ENCODE measurements at regions of chr4 and their contacts with region 1.

Region 1: DNA sequence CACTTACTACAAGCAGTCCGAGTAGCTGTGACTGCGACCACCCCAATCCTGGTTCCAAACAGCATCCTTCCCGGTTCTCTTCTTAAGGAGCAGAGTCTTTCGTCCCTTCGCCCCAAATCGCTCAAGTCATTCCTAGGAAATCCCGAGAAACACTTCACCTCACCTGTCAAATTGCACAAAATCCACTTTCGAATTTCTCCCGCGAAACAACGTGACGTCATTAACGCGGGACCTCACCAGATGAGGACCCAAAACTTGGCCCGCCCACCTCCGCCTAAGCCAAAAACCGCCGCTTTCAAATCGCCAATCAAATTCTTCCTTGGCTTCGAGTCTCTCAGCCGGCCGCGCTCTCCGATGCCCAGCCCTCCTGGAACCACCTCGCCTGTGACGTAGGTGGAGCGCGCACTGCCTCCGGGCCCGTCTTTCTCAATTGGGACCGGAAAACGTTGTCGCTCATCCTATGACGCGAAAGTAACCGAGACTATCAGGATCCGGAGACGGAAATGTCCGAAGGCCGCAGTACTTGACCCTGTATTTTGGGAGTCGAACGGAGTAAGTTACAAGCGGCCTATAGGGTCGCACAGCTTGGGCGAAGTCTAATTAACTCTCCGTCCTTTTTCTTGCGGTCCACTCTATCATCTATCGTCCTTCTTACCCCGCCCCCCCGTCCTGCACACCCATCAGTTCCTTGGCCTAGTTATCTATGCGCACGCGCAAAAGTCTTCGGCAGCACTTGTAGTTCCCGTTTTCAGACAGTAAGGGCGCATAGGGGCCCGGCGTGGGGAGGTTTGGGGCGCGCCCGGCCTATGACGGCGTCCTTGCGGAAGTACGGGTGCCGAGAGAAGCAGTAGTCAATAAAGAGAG is at the starts of genes LARP7 and ZGRF1:
- DNase-seq: peak; percentile 95 to 99 (median 96)
- ATAC-seq: peak; percentile 85
- H3K4me3 ChIP-seq: peak within 1 kb of the TSS; percentile 73
- H3K4me3 Mint-ChIP-seq: no peak within 1 kb of the TSS
- H3K27ac ChIP-seq: peak within 1 kb of the TSS; percentile 98
- H3K27ac Mint-ChIP-seq: no peak within 1 kb of the TSS
- H3K4me1 ChIP-seq: peaks cover 16% of the 10 kb centered on the region
- H3K4me1 Mint-ChIP-seq: peaks cover 18% of the 10 kb centered on the region
- H3K27me3 ChIP-seq: no peaks in the 10 kb centered on the region
- H3K27me3 Mint-ChIP-seq: no peaks in the 10 kb centered on the region
- CTCF ChIP-seq: peak; percentile 78
- total RNA-seq, gene LARP7: 42.9 to 43.5 TPM
- total RNA-seq, gene ZGRF1: 11.3 to 11.7 TPM

Region 2: GRCh38 chr4:112231779-112232713 is 404.9 kb before region 1 on chr4 and contains the start of gene AP1AR:
- CTCF ChIA-PET with region 1: no interaction called
- POLR2A ChIA-PET with region 1: no interaction called
- intact Hi-C with region 1: loop called (anchors 1 to 2 kb)
- DNase-seq: peak; percentile 53 to 90 (median 69)
- ATAC-seq: peak; percentile 50
- H3K4me3 ChIP-seq: peak within 1 kb of the TSS; percentile 93
- H3K4me3 Mint-ChIP-seq: peak within 1 kb of the TSS; percentile 99
- H3K27ac ChIP-seq: peak within 1 kb of the TSS; percentile 93 to 96
- H3K27ac Mint-ChIP-seq: peak within 1 kb of the TSS; percentile 98
- H3K4me1 ChIP-seq: peaks cover 13% of the 10 kb centered on the region
- H3K4me1 Mint-ChIP-seq: peaks cover 55% of the 10 kb centered on the region
- H3K27me3 ChIP-seq: no peaks in the 10 kb centered on the region
- H3K27me3 Mint-ChIP-seq: no peaks in the 10 kb centered on the region
- CTCF ChIP-seq: no peak
- total RNA-seq, gene AP1AR: 3.7 to 4.8 TPM

Region 3: GRCh38 chr4:112436955-112437354 is 200.0 kb before region 1 on chr4:
- CTCF ChIA-PET with region 1: no interaction called
- POLR2A ChIA-PET with region 1: no interaction called
- intact Hi-C with region 1: no loop called
- DNase-seq: no peak
- ATAC-seq: no peak
- H3K4me3 ChIP-seq: no peak overlapping the region
- H3K4me3 Mint-ChIP-seq: no peak overlapping the region
- H3K27ac ChIP-seq: no peak overlapping the region
- H3K27ac Mint-ChIP-seq: no peak overlapping the region
- H3K4me1 ChIP-seq: no peaks in the 10 kb centered on the region
- H3K4me1 Mint-ChIP-seq: no peaks in the 10 kb centered on the region
- H3K27me3 ChIP-seq: no peaks in the 10 kb centered on the region
- H3K27me3 Mint-ChIP-seq: no peaks in the 10 kb centered on the region
- CTCF ChIP-seq: no peak

Region 4: GRCh38 chr4:112514469-112515303 is 122.2 kb before region 1 on chr4:
- CTCF ChIA-PET with region 1: no interaction called
- POLR2A ChIA-PET with region 1: interaction called, 4 read pairs
- intact Hi-C with region 1: loop called in 1 of 2 experiments (anchors 5 kb)
- DNase-seq: peak in 1 of 14 experiments; percentile 39
- ATAC-seq: no peak
- H3K4me3 ChIP-seq: peak overlapping the region; percentile 63
- H3K4me3 Mint-ChIP-seq: peak overlapping the region; percentile 71
- H3K27ac ChIP-seq: no peak overlapping the region
- H3K27ac Mint-ChIP-seq: peak overlapping the region; percentile 28
- H3K4me1 ChIP-seq: peaks cover 56% of the 10 kb centered on the region
- H3K4me1 Mint-ChIP-seq: peaks cover 76% of the 10 kb centered on the region
- H3K27me3 ChIP-seq: peaks cover 81 to 97% of the 10 kb centered on the region in 2 experiments
- H3K27me3 Mint-ChIP-seq: peaks cover 98% of the 10 kb centered on the region
- CTCF ChIP-seq: no peak

Region 5: DNA sequence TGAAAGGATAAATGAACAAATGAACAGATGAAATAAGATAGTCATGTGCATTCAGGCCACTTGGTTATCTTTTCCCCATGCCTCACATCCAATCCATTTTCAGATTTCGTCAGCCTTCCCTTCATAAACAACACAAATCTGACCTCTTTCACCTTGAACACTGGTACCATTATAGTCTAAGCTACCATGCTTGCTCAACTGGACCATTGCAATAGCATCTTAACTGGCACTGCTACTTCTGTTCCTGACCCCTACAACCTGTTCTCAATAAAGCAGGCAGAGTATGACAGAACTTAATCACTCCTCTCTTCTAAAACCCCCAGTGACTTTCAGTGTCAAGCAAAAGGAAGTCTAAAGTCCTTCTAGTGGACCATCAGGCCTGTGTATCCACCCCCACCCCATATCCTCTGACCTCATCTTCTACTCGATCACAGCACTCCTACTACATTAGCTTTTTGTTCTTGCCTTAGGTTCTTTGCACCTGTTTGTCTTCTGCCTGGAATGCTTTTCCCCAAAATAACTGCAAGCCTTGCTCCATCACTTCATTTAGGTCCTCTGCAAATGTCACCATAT is 40.7 kb after region 1 on chr4:
- CTCF ChIA-PET with region 1: no interaction called
- POLR2A ChIA-PET with region 1: no interaction called
- intact Hi-C with region 1: no loop called
- DNase-seq: no peak
- ATAC-seq: no peak
- H3K4me3 ChIP-seq: no peak overlapping the region
- H3K4me3 Mint-ChIP-seq: no peak overlapping the region
- H3K27ac ChIP-seq: no peak overlapping the region
- H3K27ac Mint-ChIP-seq: no peak overlapping the region
- H3K4me1 ChIP-seq: no peaks in the 10 kb centered on the region
- H3K4me1 Mint-ChIP-seq: no peaks in the 10 kb centered on the region
- H3K27me3 ChIP-seq: no peaks in the 10 kb centered on the region
- H3K27me3 Mint-ChIP-seq: no peaks in the 10 kb centered on the region
- CTCF ChIP-seq: no peak

Region 6: GRCh38 chr4:112704991-112705845 is 68.3 kb after region 1 on chr4:
- CTCF ChIA-PET with region 1: no interaction called
- POLR2A ChIA-PET with region 1: no interaction called
- intact Hi-C with region 1: no loop called
- DNase-seq: peak in 3 of 14 experiments; percentile 4 to 29 (median 20)
- ATAC-seq: no peak
- H3K4me3 ChIP-seq: peak overlapping the region; percentile 43
- H3K4me3 Mint-ChIP-seq: peak overlapping the region; percentile 89
- H3K27ac ChIP-seq: no peak overlapping the region
- H3K27ac Mint-ChIP-seq: no peak overlapping the region
- H3K4me1 ChIP-seq: peaks cover 18% of the 10 kb centered on the region
- H3K4me1 Mint-ChIP-seq: peaks cover 21% of the 10 kb centered on the region
- H3K27me3 ChIP-seq: peaks cover 23 to 39% of the 10 kb centered on the region in 2 experiments
- H3K27me3 Mint-ChIP-seq: peaks cover 53% of the 10 kb centered on the region
- CTCF ChIP-seq: no peak

Region 7: DNA sequence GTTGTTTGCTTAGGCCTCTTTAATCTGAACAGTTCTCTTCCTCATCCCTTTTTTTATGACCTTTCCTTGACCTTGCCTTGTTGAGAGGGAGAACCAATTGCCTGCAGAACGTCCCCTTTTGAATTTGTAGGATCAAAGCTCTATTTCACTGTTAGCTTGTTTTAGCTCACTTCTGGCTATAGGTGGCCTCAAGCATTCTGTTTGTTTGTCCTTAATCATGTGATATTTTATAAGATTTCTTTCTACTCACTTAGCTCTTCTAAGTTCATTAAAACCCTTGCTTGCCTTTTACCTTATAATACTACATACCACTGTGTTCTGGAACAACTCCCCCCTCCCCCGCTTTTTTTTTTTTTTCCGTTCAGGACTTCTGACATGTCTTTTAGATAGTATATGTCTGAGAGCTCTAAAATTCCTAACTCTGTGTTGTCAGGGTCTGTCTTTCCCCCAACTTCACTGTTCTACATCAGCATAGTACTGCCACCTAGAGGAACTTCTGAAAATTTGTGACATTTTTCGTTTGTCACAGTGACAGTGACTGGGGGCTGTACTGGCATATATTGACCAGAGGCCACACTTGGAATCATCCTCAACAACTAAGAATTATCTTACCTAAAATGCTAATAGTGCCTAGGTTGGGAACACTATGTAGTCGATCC is 128.5 kb after region 1 on chr4:
- CTCF ChIA-PET with region 1: interaction called, 6 read pairs
- POLR2A ChIA-PET with region 1: interaction called, 3 read pairs
- intact Hi-C with region 1: loop called in 1 of 2 experiments (anchors 2 kb)
- DNase-seq: peak in 3 of 14 experiments; percentile 3 to 22 (median 11)
- ATAC-seq: no peak
- H3K4me3 ChIP-seq: no peak overlapping the region
- H3K4me3 Mint-ChIP-seq: no peak overlapping the region
- H3K27ac ChIP-seq: no peak overlapping the region
- H3K27ac Mint-ChIP-seq: no peak overlapping the region
- H3K4me1 ChIP-seq: no peaks in the 10 kb centered on the region
- H3K4me1 Mint-ChIP-seq: no peaks in the 10 kb centered on the region
- H3K27me3 ChIP-seq: no peaks in the 10 kb centered on the region
- H3K27me3 Mint-ChIP-seq: peaks cover 14% of the 10 kb centered on the region
- CTCF ChIP-seq: peak; percentile 29

Region 8: DNA sequence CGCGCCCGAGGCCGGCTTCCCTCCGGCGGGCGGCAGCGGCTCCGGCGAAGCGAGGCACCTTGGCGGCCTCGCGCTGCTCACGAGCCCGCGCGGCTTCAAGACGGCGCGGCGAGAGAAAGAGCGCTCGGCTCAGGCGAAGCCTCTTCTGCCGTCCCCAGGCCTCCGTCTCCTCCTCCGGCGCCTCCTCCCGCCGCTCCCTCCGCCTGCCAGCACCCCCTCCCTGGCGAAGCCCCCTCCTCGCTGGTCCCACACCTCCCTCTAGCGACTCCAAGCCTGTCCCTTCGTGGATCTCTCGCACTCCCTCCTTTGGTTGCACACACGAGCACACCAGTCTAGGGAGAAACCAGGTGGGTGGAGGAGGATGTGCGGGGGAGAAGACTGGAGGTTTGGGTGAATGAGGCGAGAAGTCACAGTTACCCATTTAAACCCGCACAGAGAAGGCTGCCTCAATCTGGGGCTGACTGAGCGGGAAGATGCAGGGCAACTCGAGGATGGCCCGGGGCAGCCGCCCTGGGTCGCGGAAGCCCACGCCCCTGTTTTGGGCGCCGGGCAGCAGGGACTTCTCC is 1124.8 kb after region 1 on chr4 and contains the start of gene CAMK2D:
- CTCF ChIA-PET with region 1: no interaction called
- POLR2A ChIA-PET with region 1: no interaction called
- intact Hi-C with region 1: loop called in 1 of 2 experiments (anchors 10 kb)
- DNase-seq: peak; percentile 65 to 95 (median 79)
- ATAC-seq: peak; percentile 65
- H3K4me3 ChIP-seq: peak within 1 kb of the TSS; percentile 87
- H3K4me3 Mint-ChIP-seq: peak within 1 kb of the TSS; percentile 95
- H3K27ac ChIP-seq: peak within 1 kb of the TSS; percentile 94 to 96
- H3K27ac Mint-ChIP-seq: peak within 1 kb of the TSS; percentile 95
- H3K4me1 ChIP-seq: peaks cover 7% of the 10 kb centered on the region
- H3K4me1 Mint-ChIP-seq: peaks cover 37% of the 10 kb centered on the region
- H3K27me3 ChIP-seq: no peaks in the 10 kb centered on the region
- H3K27me3 Mint-ChIP-seq: no peaks in the 10 kb centered on the region
- CTCF ChIP-seq: peak; percentile 37
- total RNA-seq, gene CAMK2D: 29.9 to 32.9 TPM